Posterior vena cava (tissue), 2 donors: ENCODE measurements at regions of chr5 and their contacts with region 1.

Region 1: DNA sequence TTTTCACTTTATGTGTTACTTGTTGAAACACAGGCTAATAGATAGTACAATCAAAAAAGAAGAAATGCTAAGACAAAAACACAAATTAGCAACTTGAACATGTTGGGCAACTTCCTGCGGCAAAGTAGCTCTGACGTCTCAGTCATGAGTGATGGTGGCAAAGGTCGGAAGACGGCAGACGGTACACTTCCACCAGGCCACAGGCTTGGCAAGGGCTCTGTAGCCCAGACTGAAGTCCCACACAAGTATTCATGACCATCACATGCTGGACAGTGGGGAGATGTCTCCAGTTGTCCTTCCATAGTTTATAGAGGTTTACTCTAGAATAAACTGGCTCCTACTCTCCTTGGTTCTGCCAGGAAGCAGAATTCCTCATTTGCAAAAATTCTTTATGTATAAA is 831.3 kb downstream of the MTRR start:
- DNase-seq: no peak

Region 2: GRCh38 chr5:8686707-8687106 is 13.5 kb before region 1 on chr5:
- intact Hi-C with region 1: loop called in 1 of 2 experiments (anchors 2 kb)
- DNase-seq: no peak